Right lobe of liver (tissue), 6 donors: ENCODE measurements at regions of chr9 and their contacts with region 1.

Region 1: DNA sequence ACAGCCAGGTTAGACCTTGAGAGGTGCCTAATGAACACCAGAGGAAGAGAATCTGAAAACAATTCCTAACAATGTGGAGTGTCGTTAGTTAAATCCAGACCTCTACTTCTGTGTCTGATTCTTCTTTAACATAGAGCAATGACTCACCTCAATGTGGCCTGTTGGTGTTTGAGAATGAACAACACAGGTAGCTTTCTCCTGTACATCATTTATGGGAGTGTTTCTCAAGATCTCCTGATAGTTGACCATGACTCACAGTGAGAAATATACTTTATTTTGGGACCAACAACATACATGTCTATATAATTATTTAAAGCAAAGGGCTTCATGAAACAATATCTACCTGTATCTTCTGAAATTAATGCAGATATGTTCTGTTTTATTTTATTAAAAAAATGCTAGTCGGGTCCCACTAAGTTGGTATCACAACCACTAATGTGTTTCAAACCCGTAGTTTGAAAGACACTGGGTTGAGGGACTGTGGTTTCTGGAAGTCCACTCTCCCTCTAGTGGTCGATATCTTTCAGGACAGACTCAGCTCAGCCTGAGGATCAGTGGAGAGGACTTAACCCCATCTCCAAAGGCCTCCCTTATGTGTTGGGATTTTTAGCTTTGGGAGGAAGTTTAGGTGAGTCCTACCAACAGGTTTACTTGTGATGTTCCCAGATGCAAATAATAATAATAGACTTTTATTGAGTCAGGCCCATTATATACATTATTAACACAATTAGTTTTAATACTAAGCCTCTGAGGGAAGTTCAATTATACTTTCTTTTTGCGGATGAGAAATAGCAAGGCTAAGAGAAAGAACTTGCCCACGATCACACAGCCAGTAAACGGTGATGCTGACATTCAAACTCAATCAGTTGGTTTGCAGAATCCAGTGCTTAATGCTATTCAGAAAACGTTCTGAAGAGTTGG is 70.0 kb upstream of the KLF9 start:
- DNase-seq: no peak
- ATAC-seq: peak; percentile 72 to 77 (median 74)
- H3K4me3 ChIP-seq: no peak overlapping the region
- H3K27ac ChIP-seq: peak overlapping the region; percentile 27 to 62 (median 29)
- H3K4me1 ChIP-seq: peaks cover 0 to 37% (median 18%) of the 10 kb centered on the region in 4 donors
- H3K27me3 ChIP-seq: no peaks in the 10 kb centered on the region
- CTCF ChIP-seq: peak; percentile 75 to 80 (median 77)
- POLR2A ChIP-seq: no peak

Region 2: DNA sequence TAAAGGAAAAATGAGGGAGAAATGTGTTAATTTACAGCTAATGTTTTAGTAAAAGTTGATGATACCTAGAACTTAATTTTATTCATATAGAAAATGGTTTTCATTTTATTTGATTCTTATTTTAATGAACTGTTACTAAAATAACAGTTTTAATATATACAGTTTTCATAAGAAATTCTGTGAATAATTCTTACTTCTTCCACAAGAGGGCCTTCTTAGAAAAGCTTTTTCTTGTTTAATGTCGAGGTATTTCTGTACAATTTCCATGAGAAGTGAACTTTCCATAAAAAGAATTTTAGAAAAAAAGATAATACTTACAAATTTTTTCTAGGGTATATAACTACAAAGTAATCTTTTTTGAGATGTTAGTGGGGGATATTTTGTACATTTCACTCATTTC is 143.9 kb before region 1 on chr9:
- intact Hi-C with region 1: no loop called
- DNase-seq: no peak
- ATAC-seq: peak in 3 of 4 donors; percentile 27 to 43 (median 34)
- H3K4me3 ChIP-seq: no peak overlapping the region
- H3K27ac ChIP-seq: no peak overlapping the region
- H3K4me1 ChIP-seq: no peaks in the 10 kb centered on the region
- H3K27me3 ChIP-seq: no peaks in the 10 kb centered on the region
- CTCF ChIP-seq: peak; percentile 45 to 52 (median 48)
- POLR2A ChIP-seq: no peak

Region 3: GRCh38 chr9:70419546-70420266 is 64.8 kb before region 1 on chr9:
- intact Hi-C with region 1: loop called (anchors 2 to 10 kb)
- DNase-seq: peak; percentile 94 to 97 (median 97)
- ATAC-seq: peak; percentile 51 to 62 (median 60)
- H3K4me3 ChIP-seq: peak overlapping the region; percentile 41 to 66 (median 50)
- H3K27ac ChIP-seq: peak overlapping the region; percentile 97 to 100 (median 100)
- H3K4me1 ChIP-seq: peaks cover 0 to 49% (median 14%) of the 10 kb centered on the region in 4 donors
- H3K27me3 ChIP-seq: no peaks in the 10 kb centered on the region
- CTCF ChIP-seq: peak in 1 of 4 donors; percentile 8
- POLR2A ChIP-seq: peak; percentile 97